Cardiac septum (tissue), 1 donor: ENCODE measurements at regions of chr2 and their contacts with region 1.

Region 1: DNA sequence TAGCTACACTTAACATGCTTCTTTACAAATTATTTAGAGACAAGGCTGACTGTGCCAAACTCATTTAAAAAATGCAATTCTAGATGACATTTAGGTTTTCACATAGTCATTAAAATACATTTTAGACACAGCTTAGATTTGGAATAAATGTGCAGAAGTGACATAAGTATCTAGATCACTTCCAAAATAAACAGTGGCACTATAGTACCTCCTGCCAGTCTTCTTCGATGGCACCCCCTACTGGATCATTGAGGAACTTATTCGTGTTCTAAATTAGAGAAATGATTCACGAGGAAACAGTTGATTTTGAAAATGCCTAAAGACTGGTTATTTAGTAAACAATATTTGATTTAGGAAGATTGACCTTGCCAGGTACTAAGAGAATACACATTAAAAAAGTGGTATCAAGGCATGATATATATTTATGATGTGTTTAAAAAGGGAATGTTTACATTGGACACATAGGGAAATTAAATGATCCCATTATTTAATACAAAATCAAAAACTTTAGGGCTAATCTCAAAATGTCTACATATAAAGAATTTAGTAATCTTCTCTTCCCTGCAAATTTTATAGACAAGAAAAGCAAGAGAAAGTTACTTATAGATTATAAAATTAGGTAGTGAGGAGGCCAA is 323.9 kb downstream of the XIRP2 start:
- DNase-seq: no peak

Region 2: GRCh38 chr2:166539340-166540162 is 672.6 kb before region 1 on chr2:
- intact Hi-C with region 1: loop called (anchors 10 kb)
- DNase-seq: no peak

Region 3: DNA sequence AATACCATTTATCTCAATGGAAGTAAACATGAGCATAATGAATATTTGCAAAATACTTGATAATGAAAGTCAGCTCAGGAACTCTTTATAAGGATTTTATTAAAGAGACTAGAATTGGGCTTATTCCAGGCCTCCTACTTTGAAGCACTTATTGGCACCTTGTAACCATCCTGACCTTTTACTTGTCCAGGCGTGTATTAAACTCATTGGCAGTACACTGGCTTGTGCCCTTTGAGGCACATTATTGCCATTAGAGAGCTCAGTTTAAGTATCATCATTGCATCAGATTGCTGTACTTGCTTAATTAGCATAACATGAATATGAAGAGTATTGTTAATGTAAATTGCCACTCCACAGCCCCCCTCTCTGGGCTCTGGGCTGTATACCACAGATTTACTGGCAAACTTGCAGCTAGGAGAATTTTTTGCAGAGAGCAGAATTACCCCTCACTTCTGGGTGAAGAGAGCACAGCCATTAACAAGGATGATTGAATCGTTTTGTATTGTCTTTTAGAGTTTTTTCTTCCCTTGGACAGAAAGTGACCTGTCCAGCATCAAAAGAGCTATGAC is 251.3 kb before region 1 on chr2:
- intact Hi-C with region 1: loop called (anchors 10 kb)
- DNase-seq: no peak

Region 4: GRCh38 chr2:167127135-167127534 is 85.0 kb before region 1 on chr2:
- intact Hi-C with region 1: loop called (anchors 5 kb)
- DNase-seq: no peak

Region 5: GRCh38 chr2:167240671-167241070 is 28.5 kb after region 1 on chr2:
- intact Hi-C with region 1: no loop called
- DNase-seq: no peak